HepG2 (cell line): ENCODE measurements at regions of chr14 and their contacts with region 1.

Region 1: GRCh38 chr14:22099942-22100763 is 426.5 kb upstream of the OR4E1 start:
- DNase-seq: peak; percentile 90
- ATAC-seq: peak; percentile 100
- H3K4me3 ChIP-seq: no peak overlapping the region
- H3K27ac ChIP-seq: no peak overlapping the region
- H3K4me1 ChIP-seq: no peaks in the 10 kb centered on the region
- H3K27me3 ChIP-seq: no peaks in the 10 kb centered on the region
- CTCF ChIP-seq: peak; percentile 92
- EP300 ChIP-seq: no peak
- POLR2A ChIP-seq: no peak
- RAD21 ChIP-seq: peak; percentile 85; the same call in 1 of the 2 replicates

Region 2: DNA sequence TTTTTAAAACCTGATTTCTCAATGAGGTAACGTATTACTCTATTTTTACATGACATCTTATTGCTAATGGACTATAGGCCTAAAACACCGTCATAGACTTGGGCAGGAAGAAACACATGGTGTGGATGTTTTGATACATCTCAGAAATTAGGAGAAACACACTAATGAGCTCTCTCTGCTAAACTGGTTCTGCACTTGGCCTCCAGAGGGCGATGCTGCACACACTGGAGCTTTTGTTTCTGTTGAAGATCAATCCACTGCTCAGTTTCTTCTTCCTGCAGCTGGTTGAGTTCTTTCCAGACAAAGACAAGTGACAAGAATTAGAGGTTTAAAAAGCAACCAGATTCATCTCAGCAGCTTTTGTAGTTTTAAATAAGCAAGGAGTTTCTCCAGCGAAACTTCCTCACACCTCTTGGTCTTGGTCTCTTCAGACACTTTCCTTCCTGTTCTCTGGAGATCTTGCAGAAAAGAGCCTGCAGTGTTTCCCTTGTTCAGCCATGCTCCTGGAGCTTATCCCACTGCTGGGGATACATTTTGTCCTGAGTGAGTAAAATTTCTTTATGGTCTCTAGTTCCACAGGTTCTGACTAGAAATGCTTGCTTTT is 248.0 kb before region 1 on chr14:
- CTCF ChIA-PET with region 1: no interaction called
- POLR2A ChIA-PET with region 1: no interaction called
- in situ Hi-C with region 1: no loop called
- intact Hi-C with region 1: no loop called
- DNase-seq: peak; percentile 47
- ATAC-seq: peak; percentile 89
- H3K4me3 ChIP-seq: no peak overlapping the region
- H3K27ac ChIP-seq: no peak overlapping the region
- H3K4me1 ChIP-seq: no peaks in the 10 kb centered on the region
- H3K27me3 ChIP-seq: 0 out of 5 replicates have a peak, but pooled peaks cover 0 to 3% of the 10 kb centered on the region in 2 experiments
- CTCF ChIP-seq: peak; percentile 64
- EP300 ChIP-seq: no peak
- POLR2A ChIP-seq: no peak
- RAD21 ChIP-seq: no peak

Region 3: DNA sequence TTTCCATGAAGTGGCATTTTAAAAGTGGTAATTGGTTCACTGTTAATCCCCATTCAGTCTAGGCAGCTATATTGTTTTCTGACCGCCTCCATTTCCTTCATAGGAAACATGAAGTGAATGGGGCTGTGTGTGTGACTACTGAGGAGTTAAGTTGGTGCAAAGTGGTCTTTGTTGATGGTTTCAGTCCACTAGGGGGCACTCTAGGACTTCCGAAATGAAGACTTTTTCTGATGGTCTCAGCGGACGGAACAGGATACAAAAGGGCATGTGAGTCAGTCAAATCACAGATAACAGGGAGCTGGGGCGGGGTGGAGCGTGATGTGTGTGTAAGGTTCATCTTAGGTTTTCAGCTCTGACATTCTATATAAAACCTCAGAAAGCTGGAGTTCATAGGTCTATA is 186.4 kb before region 1 on chr14:
- CTCF ChIA-PET with region 1: interaction called, 6 read pairs
- POLR2A ChIA-PET with region 1: no interaction called
- in situ Hi-C with region 1: no loop called
- intact Hi-C with region 1: loop called (anchors 1 kb)
- DNase-seq: peak; percentile 90
- ATAC-seq: peak; percentile 92
- H3K4me3 ChIP-seq: no peak overlapping the region
- H3K27ac ChIP-seq: no peak overlapping the region
- H3K4me1 ChIP-seq: peaks cover 7% of the 10 kb centered on the region; the same call in 1 of the 2 replicates
- H3K27me3 ChIP-seq: no peaks in the 10 kb centered on the region
- CTCF ChIP-seq: peak; percentile 81
- EP300 ChIP-seq: no peak
- POLR2A ChIP-seq: no peak
- RAD21 ChIP-seq: peak; percentile 38; the same call in 1 of the 2 replicates

Region 4: DNA sequence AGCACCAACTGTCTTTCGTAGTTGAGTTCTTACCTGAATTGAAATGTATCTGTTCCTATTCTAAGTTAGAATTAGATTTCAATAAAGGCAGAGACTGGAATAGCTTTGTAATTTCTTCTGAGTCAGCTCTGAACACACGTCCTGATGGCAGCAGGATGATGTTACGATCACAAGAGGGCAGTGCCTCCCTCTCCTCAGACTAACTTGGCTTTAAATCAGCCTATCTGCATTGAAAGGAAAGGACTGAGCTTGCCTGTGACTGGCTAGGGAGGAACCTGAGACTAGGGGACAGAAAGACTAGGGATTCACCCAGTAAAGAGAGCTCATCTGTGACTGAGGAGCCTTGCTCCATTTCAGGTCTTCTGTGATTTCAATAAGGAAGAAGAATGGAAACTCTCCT is 102.9 kb before region 1 on chr14:
- CTCF ChIA-PET with region 1: no interaction called
- POLR2A ChIA-PET with region 1: no interaction called
- in situ Hi-C with region 1: no loop called
- intact Hi-C with region 1: loop called (anchors 5 kb)
- DNase-seq: peak; percentile 43
- ATAC-seq: peak; percentile 97
- H3K4me3 ChIP-seq: no peak overlapping the region
- H3K27ac ChIP-seq: no peak overlapping the region
- H3K4me1 ChIP-seq: no peaks in the 10 kb centered on the region
- H3K27me3 ChIP-seq: no peaks in the 10 kb centered on the region
- CTCF ChIP-seq: peak; percentile 31; the same call in 1 of the 2 replicates
- EP300 ChIP-seq: no peak
- POLR2A ChIP-seq: no peak
- RAD21 ChIP-seq: no peak

Region 5: GRCh38 chr14:22026527-22026926 is 73.6 kb before region 1 on chr14:
- CTCF ChIA-PET with region 1: no interaction called
- POLR2A ChIA-PET with region 1: no interaction called
- in situ Hi-C with region 1: no loop called
- intact Hi-C with region 1: no loop called
- DNase-seq: no peak
- ATAC-seq: peak; percentile 36
- H3K4me3 ChIP-seq: no peak overlapping the region
- H3K27ac ChIP-seq: no peak overlapping the region
- H3K4me1 ChIP-seq: no peaks in the 10 kb centered on the region
- H3K27me3 ChIP-seq: peaks cover 0 to 5% of the 10 kb centered on the region in 2 experiments; a peak in 3 of 5 replicates
- CTCF ChIP-seq: no peak
- EP300 ChIP-seq: no peak
- POLR2A ChIP-seq: no peak
- RAD21 ChIP-seq: no peak

Region 6: GRCh38 chr14:22084393-22085281 is 15.5 kb before region 1 on chr14:
- CTCF ChIA-PET with region 1: interaction called, 32 read pairs
- POLR2A ChIA-PET with region 1: no interaction called
- in situ Hi-C with region 1: no loop called
- intact Hi-C with region 1: loop called (anchors 1 kb)
- DNase-seq: peak; percentile 76
- ATAC-seq: peak; percentile 86
- H3K4me3 ChIP-seq: no peak overlapping the region
- H3K27ac ChIP-seq: no peak overlapping the region
- H3K4me1 ChIP-seq: no peaks in the 10 kb centered on the region
- H3K27me3 ChIP-seq: no peaks in the 10 kb centered on the region
- CTCF ChIP-seq: peak; percentile 81
- EP300 ChIP-seq: no peak
- POLR2A ChIP-seq: no peak
- RAD21 ChIP-seq: no peak